CD8-positive, alpha-beta T cell (primary cell): ENCODE measurements at regions of chr12 and their contacts with region 1.

Region 1: GRCh38 chr12:7129872-7130680 is at the start of gene CLSTN3:
- DNase-seq: peak; percentile 66 to 93 (median 87)
- ATAC-seq: peak; percentile 88
- H3K4me3 ChIP-seq: peak within 1 kb of the TSS; percentile 97 to 99
- H3K4me3 Mint-ChIP-seq: peak within 1 kb of the TSS; percentile 91
- H3K27ac ChIP-seq: peak within 1 kb of the TSS; percentile 73 to 88
- H3K27ac Mint-ChIP-seq: peak within 1 kb of the TSS; percentile 87
- H3K4me1 ChIP-seq: peaks cover 22% of the 10 kb centered on the region
- H3K4me1 Mint-ChIP-seq: peaks cover 32% of the 10 kb centered on the region
- H3K27me3 ChIP-seq: no peaks in the 10 kb centered on the region
- H3K27me3 Mint-ChIP-seq: no peaks in the 10 kb centered on the region
- CTCF ChIP-seq: no peak
- total RNA-seq, gene CLSTN3: 23.1 to 24.0 TPM

Region 2: DNA sequence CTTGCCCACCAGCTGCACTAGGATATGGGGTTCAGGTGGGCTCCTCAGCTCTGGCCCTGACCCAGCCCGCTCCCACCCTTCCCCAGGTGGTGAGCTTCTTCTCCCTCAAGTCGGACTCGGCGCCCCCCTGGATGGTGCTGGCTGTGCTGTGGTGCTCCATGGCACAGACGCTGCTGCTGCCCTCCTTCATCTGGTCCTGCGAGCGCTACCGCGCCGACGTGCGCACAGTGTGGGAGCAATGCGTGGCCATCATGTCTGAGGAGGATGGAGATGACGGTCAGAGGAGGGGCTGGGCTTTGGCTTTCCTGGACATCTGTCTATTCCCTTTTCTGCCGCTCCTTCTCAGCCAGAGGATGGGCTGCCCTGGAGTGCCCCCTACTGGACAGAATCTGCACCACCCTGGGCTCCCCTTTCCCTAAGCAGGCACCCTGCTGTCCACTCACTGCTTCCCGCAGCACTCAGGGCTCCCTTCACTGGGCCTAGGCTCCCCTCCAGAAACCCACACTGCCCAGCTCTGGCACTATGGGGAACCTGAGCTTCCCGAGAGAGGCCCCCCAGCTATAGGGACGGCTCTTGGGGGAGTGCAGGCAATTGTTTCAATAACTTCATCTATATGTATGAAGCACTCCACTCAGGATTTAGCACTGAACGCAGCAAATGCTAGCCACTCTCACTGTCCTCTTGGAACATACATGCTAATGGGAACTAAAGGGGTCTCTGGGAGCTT is 304.5 kb before region 1 on chr12:
- CTCF ChIA-PET with region 1: no interaction called
- POLR2A ChIA-PET with region 1: no interaction called
- intact Hi-C with region 1: no loop called
- DNase-seq: peak; percentile 59 to 86 (median 79)
- ATAC-seq: peak; percentile 63
- H3K4me3 ChIP-seq: no peak overlapping the region
- H3K4me3 Mint-ChIP-seq: peak overlapping the region; percentile 5
- H3K27ac ChIP-seq: no peak overlapping the region
- H3K27ac Mint-ChIP-seq: no peak overlapping the region
- H3K4me1 ChIP-seq: peaks cover 13% of the 10 kb centered on the region
- H3K4me1 Mint-ChIP-seq: peaks cover 32% of the 10 kb centered on the region
- H3K27me3 ChIP-seq: peaks cover 10 to 45% of the 10 kb centered on the region in 2 experiments
- H3K27me3 Mint-ChIP-seq: peaks cover 48% of the 10 kb centered on the region
- CTCF ChIP-seq: peak; percentile 71

Region 3: GRCh38 chr12:6973986-6974615 is 156.0 kb before region 1 on chr12:
- CTCF ChIA-PET with region 1: no interaction called
- POLR2A ChIA-PET with region 1: no interaction called
- intact Hi-C with region 1: loop called in 1 of 2 experiments (anchors 2 kb)
- DNase-seq: no peak
- ATAC-seq: no peak
- H3K4me3 ChIP-seq: no peak overlapping the region
- H3K4me3 Mint-ChIP-seq: no peak overlapping the region
- H3K27ac ChIP-seq: no peak overlapping the region
- H3K27ac Mint-ChIP-seq: no peak overlapping the region
- H3K4me1 ChIP-seq: peaks cover 17% of the 10 kb centered on the region
- H3K4me1 Mint-ChIP-seq: peaks cover 34% of the 10 kb centered on the region
- H3K27me3 ChIP-seq: no peaks in the 10 kb centered on the region
- H3K27me3 Mint-ChIP-seq: no peaks in the 10 kb centered on the region
- CTCF ChIP-seq: no peak

Region 4: GRCh38 chr12:7188562-7189397 is 58.7 kb after region 1 on chr12:
- CTCF ChIA-PET with region 1: interaction called, 4 read pairs
- POLR2A ChIA-PET with region 1: no interaction called
- intact Hi-C with region 1: loop called in 1 of 2 experiments (anchors 1 kb)
- DNase-seq: peak; percentile 36 to 76 (median 63)
- ATAC-seq: peak; percentile 32
- H3K4me3 ChIP-seq: peak overlapping the region; percentile 85 to 86
- H3K4me3 Mint-ChIP-seq: peak overlapping the region; percentile 95
- H3K27ac ChIP-seq: peak overlapping the region; percentile 66 to 90
- H3K27ac Mint-ChIP-seq: peak overlapping the region; percentile 97
- H3K4me1 ChIP-seq: peaks cover 26% of the 10 kb centered on the region
- H3K4me1 Mint-ChIP-seq: peaks cover 44% of the 10 kb centered on the region
- H3K27me3 ChIP-seq: no peaks in the 10 kb centered on the region
- H3K27me3 Mint-ChIP-seq: no peaks in the 10 kb centered on the region
- CTCF ChIP-seq: peak; percentile 63

Region 5: GRCh38 chr12:7472060-7472459 is 342.0 kb after region 1 on chr12:
- CTCF ChIA-PET with region 1: no interaction called
- POLR2A ChIA-PET with region 1: no interaction called
- intact Hi-C with region 1: no loop called
- DNase-seq: no peak
- ATAC-seq: no peak
- H3K4me3 ChIP-seq: no peak overlapping the region
- H3K4me3 Mint-ChIP-seq: no peak overlapping the region
- H3K27ac ChIP-seq: no peak overlapping the region
- H3K27ac Mint-ChIP-seq: no peak overlapping the region
- H3K4me1 ChIP-seq: no peaks in the 10 kb centered on the region
- H3K4me1 Mint-ChIP-seq: no peaks in the 10 kb centered on the region
- H3K27me3 ChIP-seq: no peaks in the 10 kb centered on the region
- H3K27me3 Mint-ChIP-seq: no peaks in the 10 kb centered on the region
- CTCF ChIP-seq: no peak